Mammary epithelial cell (primary cell): ENCODE measurements at regions of chr5 and their contacts with region 1.

Region 1: DNA sequence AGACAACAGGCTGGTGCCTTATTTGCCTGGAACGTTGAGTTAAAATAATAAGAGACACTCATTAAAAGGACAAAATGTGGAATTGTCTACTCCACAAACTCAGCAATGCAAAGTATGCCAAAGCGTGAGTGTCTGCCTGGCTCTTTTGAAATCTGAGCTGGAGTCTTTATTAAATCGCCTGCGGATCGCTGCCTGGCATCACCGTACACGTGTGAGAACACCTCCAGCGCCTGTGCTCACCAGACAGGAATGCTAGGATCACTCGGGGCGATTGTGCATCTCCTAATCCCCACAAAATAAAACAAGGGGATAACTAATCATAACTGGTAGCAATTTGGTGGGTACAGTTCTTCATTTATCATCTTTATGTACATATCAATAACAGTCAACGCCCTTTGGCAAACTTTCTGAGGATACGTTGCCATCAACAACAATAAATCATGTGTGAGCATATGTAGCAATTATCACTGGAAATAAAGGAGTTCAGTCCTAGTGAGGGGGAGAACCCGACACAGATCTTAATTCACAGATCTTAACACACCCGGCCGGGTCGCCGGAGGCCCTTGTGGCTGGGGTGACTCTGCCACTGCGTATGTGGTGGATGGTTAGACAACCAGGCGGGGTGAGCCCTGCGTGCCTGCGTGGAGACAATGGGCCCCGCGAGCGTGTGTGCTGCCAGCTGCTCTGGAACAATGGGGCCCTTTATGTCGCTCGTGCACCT is 284.9 kb upstream of the IRX1 start:
- DNase-seq: peak; percentile 99
- H3K4me3 ChIP-seq: no peak overlapping the region
- H3K27ac ChIP-seq: peak overlapping the region; percentile 98
- H3K4me1 ChIP-seq: peaks cover 25% of the 10 kb centered on the region
- H3K27me3 ChIP-seq: no peaks in the 10 kb centered on the region
- CTCF ChIP-seq: no peak

Region 2: DNA sequence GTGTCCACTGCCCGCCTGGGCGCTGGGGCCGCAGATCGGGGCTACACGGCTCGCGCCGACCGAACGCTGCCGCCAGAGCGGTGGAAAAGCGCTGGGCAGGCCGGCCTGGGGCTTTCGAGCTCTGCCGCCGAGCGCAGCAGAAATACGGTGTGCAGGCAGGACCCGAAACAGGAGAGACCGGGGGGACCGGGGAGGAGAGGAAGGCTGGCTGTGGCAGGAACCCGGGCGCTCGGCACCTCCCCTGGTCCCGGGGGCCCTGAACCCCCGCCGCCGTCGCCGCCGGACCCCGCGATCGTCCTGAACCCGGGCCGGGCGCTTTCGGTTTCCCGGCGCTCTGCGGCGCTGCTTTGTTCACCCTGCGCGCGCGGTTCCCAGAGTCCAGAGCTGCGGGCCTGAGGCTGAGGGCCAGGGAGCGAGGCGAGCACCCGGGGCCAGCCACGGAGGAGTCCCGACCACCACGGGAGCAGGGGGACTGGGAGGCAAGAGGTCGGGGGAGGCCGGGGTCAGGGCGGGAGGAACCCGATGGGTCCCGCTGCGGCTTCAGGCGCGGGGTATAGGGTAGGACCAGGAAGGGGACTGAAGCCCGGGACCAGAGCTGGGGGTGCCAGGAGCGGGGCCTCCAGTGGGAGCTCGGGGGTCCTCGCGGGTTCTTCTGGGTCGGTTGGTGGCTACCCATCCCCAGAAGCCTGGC is 571.2 kb before region 1 on chr5:
- CTCF ChIA-PET with region 1: no interaction called
- dilution Hi-C with region 1: loop called (anchors 10 kb)
- in situ Hi-C with region 1: no loop called
- intact Hi-C with region 1: no loop called
- DNase-seq: peak; percentile 68
- H3K4me3 ChIP-seq: peak overlapping the region; percentile 58 to 64 (median 64)
- H3K27ac ChIP-seq: peak overlapping the region; percentile 49
- H3K4me1 ChIP-seq: peaks cover 30% of the 10 kb centered on the region
- H3K27me3 ChIP-seq: no peaks in the 10 kb centered on the region
- CTCF ChIP-seq: no peak

Region 3: DNA sequence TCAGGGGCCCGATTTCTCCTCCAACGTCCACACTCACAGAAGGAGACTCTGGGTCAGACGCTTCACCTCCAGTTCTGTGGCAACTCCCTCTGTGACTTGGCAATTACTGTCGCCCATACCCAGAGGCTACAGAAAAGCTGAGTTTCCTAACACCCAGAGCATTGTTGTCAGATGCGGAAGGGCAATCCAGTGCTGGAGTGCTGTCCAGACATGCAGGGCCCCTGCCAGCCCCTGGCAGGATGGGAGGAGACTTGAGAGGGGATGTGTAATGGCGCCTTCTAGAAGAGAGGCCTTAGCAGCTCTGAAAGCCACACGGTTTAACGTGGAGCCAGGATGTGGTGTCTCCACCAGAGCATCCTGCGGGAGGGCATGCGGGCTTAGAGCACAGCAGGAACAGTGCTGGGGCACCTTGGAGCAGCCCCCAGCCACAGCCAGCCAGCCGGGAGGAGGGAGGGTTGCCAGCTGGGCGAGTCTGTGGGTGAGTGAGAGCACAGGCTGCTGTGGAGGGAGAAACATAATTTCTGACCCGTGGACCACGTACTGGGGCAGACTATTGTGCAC is 145.5 kb after region 1 on chr5:
- CTCF ChIA-PET with region 1: no interaction called
- dilution Hi-C with region 1: no loop called
- in situ Hi-C with region 1: no loop called
- intact Hi-C with region 1: loop called (anchors 10 kb)
- DNase-seq: peak; percentile 72
- H3K4me3 ChIP-seq: no peak overlapping the region
- H3K27ac ChIP-seq: peak overlapping the region; percentile 39
- H3K4me1 ChIP-seq: peaks cover 10% of the 10 kb centered on the region
- H3K27me3 ChIP-seq: no peaks in the 10 kb centered on the region
- CTCF ChIP-seq: no peak

Region 4: DNA sequence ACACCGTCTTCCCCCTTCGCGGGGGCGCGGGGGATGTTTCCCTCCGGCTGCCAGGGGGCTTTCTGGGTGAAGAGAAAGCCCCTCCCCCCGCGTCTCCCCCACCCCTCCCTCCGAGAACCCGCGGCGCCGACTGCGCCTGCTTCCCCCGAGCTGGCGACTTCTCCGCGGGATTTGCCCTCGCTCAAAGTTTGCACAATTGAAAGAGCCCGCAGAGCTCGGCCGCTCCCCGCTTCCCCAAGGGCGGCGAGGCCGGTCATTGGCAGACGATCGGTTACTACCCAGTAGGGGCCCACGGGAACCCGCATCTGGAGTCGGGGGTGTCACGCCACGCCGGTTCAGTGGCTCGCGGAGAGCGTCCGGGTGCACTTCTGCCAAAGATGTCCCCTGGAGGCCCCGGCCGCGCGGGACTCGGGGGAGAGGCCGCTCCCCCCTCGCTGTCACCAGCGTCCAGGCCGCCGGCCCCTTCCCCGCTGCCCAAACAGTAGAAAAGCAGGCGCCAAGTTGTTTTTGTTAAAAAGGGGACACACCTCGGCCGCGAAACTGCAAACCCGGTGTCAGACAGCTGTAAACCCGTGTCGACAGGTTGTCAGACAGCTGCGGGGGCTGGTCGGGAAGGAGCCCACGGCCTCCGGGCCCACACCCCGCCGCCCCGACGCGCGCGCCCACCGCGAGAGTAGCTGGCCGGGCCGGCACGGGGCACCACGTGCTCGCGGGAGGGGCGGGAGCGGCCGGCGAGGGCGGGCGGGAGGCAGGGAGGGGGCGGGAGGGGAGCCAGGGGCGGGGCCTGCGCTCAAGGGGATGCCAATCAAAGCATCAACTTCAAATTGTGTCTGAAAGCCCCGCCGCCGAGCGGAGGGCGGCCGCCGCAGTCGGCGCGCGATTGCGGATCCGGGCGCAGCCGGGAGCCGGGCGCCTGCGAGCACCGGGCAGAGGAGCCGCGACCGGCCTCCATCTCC is 284.6 kb after region 1 on chr5 and contains the start of gene IRX1:
- CTCF ChIA-PET with region 1: no interaction called
- dilution Hi-C with region 1: no loop called
- in situ Hi-C with region 1: loop called in 1 of 2 experiments (anchors 5 kb)
- intact Hi-C with region 1: loop called (anchors 2 kb)
- DNase-seq: peak; percentile 73
- H3K4me3 ChIP-seq: peak within 1 kb of the TSS; percentile 82 to 100 (median 97)
- H3K27ac ChIP-seq: peak within 1 kb of the TSS; percentile 96
- H3K4me1 ChIP-seq: peaks cover 14% of the 10 kb centered on the region
- H3K27me3 ChIP-seq: no peaks in the 10 kb centered on the region
- CTCF ChIP-seq: no peak
- total RNA-seq, gene IRX1: 29.8 to 200 TPM